ENCODE measurements at regions of chr2 and their contacts with region 1.

Region 1: DNA sequence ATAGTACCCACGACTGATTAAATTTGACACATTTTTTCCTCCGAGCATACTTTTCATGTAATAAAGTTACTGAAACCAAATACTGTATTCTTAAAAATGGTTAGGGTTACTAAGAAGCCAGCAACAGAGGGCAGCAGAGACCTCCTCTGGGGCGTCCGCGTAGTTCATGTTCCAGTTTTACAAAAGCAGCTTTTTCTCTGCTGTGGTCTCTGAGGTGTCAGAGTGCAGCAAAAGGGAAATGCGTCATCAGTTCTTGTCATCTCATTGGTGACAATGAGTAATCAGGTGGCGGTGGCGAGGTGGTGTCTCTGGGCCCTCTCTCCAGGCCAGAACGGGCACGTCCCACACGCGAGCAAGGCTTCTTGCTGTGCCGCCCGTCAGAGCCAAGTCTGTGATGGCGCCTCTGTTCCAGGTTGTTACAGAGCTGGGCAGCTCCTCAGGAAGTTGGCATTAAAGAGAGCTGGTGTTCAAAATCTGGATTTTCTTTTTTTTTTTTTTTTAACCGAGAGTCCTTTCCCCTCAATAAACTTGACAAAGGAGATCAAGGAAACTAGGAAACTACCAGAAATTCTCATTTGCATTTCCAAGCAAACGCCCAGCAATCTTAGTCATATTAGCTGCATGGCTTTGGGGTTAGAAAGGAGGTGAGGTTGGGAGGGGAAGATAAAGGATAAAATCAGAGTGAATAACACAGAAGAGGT is 98.6 kb upstream of the BZW1 start:
- DNase-seq: peak; percentile 96
- H3K4me3 Mint-ChIP-seq: peak overlapping the region; percentile 77
- H3K27ac Mint-ChIP-seq: peak overlapping the region; percentile 100
- H3K4me1 Mint-ChIP-seq: peaks cover 32% of the 10 kb centered on the region
- H3K27me3 Mint-ChIP-seq: no peaks in the 10 kb centered on the region

Region 2: DNA sequence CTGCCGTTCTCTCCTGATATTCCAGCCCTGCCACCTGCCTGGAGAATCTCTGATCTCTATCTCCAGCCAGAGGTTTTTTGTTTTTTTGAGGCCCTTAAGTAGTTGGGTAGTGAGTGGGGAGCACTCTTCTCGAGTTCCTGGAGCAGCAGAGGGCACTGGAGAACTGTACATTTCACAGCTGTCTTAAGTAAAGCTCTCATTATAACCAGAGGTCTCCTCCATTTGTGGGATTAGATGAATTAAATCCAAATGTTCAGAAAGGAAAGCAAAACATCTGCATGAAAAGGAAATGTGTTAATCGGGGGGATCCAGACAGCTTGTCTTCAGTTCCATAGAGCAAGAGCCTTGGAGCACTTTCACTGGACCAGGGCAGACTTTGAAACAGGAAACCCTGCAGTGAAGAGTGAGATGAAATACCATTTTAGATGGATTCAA is 94.5 kb before region 1 on chr2:
- CTCF ChIA-PET with region 1: no interaction called
- intact Hi-C with region 1: loop called (anchors 1 kb)
- DNase-seq: peak; percentile 29
- H3K4me3 Mint-ChIP-seq: no peak overlapping the region
- H3K27ac Mint-ChIP-seq: no peak overlapping the region
- H3K4me1 Mint-ChIP-seq: peaks cover 10% of the 10 kb centered on the region
- H3K27me3 Mint-ChIP-seq: no peaks in the 10 kb centered on the region

Region 3: DNA sequence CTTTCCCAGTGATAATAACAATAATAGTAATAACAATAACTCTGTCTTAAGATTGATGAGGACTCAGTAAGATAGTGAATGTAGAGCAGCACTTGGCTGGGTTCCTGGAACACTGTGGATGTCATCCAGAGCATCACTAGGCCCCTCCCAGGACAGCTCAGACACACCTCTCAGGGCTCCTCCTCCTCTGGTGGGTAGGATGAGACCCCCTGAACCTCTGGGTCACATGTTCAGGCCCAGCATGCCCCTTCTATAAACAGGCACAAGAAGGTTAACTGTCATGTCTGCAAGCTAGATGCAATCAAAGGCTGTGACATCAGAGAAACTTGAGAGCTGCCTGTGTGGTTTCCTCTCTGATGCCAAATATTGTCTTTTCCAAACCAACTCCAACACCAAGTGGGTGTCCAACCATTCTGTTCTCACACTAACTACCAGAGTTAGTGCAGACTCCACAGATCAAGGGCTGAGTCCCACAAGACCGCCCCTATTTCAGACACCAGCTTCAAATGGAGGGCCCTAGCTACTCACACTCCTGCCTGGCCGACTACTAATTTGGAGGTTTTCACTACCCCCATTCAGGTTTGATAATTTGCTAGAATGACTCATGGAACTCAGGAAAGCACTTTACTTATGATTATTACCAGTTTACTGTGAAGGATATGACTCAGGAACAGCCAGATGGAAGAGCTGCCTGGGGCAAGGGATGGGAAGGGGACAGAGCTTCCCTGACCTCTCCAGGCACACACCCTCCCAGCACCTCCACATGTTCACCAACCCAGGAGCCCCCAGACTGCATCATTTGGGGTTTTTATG is 52.2 kb after region 1 on chr2:
- CTCF ChIA-PET with region 1: interaction called, 12 read pairs
- intact Hi-C with region 1: loop called (anchors 1 kb)
- DNase-seq: peak; percentile 70
- H3K4me3 Mint-ChIP-seq: peak overlapping the region; percentile 32
- H3K27ac Mint-ChIP-seq: peak overlapping the region; percentile 92
- H3K4me1 Mint-ChIP-seq: peaks cover 27% of the 10 kb centered on the region
- H3K27me3 Mint-ChIP-seq: no peaks in the 10 kb centered on the region

Region 4: DNA sequence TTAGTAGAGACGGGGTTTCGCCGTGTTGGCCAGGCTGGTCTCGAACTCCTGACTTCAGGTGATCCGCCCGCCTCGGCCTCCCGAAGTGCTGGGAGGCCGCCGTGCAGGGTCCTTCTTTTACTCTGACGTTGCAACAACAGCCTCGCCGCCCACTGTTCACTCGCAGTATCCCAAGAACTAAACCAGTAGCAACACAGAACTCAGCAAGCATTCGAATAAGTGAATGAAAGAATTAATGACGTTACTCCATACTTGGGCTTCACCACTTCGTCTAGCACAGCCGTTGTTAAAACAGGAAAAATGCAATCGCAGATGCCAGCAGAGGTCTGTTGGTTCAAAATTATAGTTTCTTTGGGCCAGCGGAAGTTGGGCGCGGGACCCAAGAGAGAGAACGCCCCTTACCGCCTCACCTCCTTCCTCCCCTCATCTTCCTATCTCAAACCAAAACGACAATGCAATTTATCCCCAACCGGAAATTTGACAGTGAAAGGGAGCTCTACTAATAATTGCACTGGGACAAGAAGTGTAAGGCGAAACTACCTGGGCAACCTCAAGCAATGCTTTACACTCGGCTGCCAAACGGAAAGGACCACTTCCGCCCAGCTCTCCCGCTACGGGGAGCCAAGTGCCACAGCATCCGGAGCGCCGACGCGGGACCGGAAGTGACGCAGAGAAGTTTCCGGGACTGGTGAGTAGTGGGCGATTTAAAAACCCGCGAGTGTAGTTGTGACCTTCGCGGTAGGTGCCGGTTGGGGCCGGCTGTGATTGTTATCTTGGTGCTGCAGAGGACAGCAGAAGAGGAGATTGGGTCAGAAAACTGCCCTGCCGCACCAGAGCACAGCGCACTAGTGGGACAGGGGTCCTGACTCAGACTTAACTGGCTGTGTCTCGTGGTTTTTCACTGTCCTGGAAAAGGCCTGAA is 175.8 kb after region 1 on chr2 and contains the starts of genes NIF3L1 and PPIL3:
- CTCF ChIA-PET with region 1: interaction called, 5 read pairs
- intact Hi-C with region 1: loop called (anchors 1 kb)
- DNase-seq: peak; percentile 99
- H3K4me3 Mint-ChIP-seq: peak within 1 kb of the TSS; percentile 88
- H3K27ac Mint-ChIP-seq: peak within 1 kb of the TSS; percentile 97
- H3K4me1 Mint-ChIP-seq: peaks cover 50% of the 10 kb centered on the region
- H3K27me3 Mint-ChIP-seq: no peaks in the 10 kb centered on the region
- total RNA-seq, gene NIF3L1: 31.6 to 33.3 TPM
- total RNA-seq, gene PPIL3: 81.3 to 82.2 TPM

Region 5: DNA sequence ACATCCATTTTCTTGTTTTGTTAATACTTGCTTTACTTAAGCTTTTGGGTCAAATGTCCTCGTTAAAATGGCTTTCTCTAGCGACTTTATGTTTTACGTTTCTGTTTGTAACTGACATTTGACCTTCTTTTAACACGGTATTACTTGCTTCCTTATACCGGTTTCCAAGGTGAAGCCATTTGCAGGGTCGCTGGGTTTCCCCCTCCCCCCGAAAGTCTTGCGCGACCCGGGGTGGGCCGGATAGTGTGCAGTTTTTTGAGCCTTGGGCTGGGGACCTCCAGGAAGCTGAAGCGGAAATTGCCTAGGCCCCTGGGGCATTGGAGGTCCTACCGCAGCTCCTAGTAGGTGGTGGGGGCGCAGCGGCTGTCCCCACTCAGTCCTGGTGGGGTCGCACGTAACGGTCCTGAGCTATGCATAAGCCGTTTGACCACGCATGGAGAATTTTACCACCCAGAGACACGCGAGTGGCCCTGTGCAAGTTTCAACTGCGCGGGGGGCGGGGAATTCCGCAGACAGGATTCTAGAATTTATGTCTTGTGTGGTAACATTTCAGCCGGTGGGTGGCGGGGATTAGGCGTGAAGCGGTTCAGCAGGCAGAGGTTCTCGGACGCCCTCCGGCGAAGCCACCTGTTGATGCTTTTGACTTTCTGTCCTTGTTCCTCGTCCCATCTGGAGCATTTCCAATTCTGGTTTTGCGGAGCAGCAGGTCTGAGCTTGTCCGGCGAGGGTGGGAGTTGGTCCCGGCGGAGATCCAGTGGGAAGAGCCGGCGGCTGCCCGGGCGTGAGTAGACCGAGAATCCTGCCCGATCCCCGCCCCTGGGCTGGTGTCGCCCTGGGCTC is 405.2 kb after region 1 on chr2:
- CTCF ChIA-PET with region 1: no interaction called
- intact Hi-C with region 1: loop called (anchors 1 kb)
- DNase-seq: peak; percentile 94
- H3K4me3 Mint-ChIP-seq: peak overlapping the region; percentile 96
- H3K27ac Mint-ChIP-seq: peak overlapping the region; percentile 100
- H3K4me1 Mint-ChIP-seq: peaks cover 41% of the 10 kb centered on the region
- H3K27me3 Mint-ChIP-seq: no peaks in the 10 kb centered on the region

Region 6: DNA sequence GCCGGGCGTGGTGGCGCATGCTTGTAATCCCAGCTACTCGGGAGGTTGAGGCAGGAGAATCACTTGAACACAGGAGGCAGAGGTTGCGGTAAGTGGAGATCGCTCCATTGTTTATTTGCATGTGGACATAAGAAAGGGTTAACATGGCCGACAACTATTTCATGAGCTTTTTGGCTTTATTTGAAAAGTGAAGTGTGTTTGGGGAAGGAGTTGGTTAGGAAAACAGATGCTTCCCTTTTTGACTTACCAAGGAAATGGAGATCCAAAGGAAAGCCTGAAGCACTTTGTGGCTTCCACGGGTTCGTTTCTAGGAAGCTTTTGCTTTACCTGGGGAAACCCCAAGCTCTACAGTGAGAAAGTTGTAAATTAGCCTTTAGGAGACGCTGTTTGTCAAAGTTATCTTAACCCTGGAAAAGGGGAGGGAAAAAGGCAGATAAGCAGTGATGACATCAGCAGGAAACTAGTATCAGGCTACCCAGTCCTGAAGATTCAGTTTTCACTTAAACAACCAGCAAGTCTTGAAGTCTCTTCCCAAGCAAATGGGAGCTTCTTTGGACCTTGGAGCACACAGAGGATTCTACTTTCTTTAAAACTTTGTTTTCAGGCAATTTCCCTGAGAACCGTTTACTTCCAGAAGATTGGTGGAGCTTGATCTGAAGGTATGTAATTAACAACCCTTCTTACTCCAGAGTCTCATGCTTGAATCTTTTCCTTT is 469.7 kb after region 1 on chr2 and contains the start of gene CASP10:
- CTCF ChIA-PET with region 1: no interaction called
- intact Hi-C with region 1: loop called (anchors 1 kb)
- DNase-seq: peak; percentile 32
- H3K4me3 Mint-ChIP-seq: peak within 1 kb of the TSS; percentile 97
- H3K27ac Mint-ChIP-seq: peak within 1 kb of the TSS; percentile 96
- H3K4me1 Mint-ChIP-seq: peaks cover 39% of the 10 kb centered on the region
- H3K27me3 Mint-ChIP-seq: no peaks in the 10 kb centered on the region
- total RNA-seq, gene CASP10: 22.0 to 22.1 TPM

Measured in activated naive CD4-positive, alpha-beta T cell treated with anti-CD3 and anti-CD28 coated beads for 36 hours (primary cell).